ENCODE measurements at regions of chr11 and their contacts with region 1.

Region 1: GRCh38 chr11:3786781-3787428 is 10.4 kb downstream of the NUP98 start:
- DNase-seq: no peak
- H3K4me3 ChIP-seq: no peak overlapping the region
- H3K4me3 Mint-ChIP-seq: no peak overlapping the region
- H3K27ac Mint-ChIP-seq: no peak overlapping the region
- H3K4me1 ChIP-seq: 0 out of 2 replicates have a peak, but pooled peaks cover 7% of the 10 kb centered on the region
- H3K4me1 Mint-ChIP-seq: peaks cover 14% of the 10 kb centered on the region
- H3K27me3 ChIP-seq: no peaks in the 10 kb centered on the region
- H3K27me3 Mint-ChIP-seq: no peaks in the 10 kb centered on the region
- CTCF ChIP-seq: no peak

Region 2: GRCh38 chr11:3732671-3733436 is 54.1 kb before region 1 on chr11:
- CTCF ChIA-PET with region 1: no interaction called
- POLR2A ChIA-PET with region 1: no interaction called
- intact Hi-C with region 1: no loop called
- DNase-seq: no peak
- H3K4me3 ChIP-seq: no peak overlapping the region
- H3K4me3 Mint-ChIP-seq: no peak overlapping the region
- H3K27ac Mint-ChIP-seq: no peak overlapping the region
- H3K4me1 ChIP-seq: no peaks in the 10 kb centered on the region
- H3K4me1 Mint-ChIP-seq: peaks cover 13% of the 10 kb centered on the region
- H3K27me3 ChIP-seq: no peaks in the 10 kb centered on the region
- H3K27me3 Mint-ChIP-seq: no peaks in the 10 kb centered on the region
- CTCF ChIP-seq: no peak

Region 3: DNA sequence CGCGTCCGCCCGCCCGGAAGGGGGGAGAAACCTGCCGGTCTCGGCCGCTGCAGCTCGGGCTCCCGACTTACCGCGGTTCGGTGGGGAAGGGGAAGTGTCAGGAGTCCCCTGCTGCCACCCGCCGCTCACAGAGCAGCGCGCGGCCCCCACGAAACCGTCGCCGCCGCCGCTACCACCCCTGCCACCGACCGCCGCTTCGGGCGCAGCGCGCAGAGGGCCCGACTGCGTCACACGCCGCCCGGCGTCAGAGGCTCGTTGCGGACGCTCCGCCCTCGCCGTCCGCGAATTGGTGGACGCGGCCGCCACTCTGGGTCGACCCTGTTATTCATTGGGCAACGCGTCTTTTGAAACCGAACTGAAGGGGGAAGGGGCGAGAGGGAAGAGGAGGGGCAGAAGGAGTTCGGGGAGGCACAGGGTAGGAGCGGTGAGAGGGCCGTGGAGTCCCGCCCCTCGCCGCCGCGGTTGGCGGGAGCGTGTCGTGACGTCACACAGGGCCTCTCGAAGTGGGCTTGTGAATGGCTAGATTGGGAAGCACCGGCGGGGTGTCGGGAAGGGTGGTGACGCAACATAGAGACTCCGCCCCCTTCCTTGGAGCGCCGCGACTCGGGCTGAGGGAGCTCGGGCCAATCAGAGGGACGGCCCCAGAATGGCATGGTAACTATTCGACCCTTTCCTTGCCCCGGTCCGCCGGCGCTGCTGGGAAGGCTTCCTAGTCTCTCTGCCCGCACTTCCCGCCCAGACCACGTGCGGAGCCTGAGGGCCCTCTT is 10.6 kb after region 1 on chr11 and contains the start of gene NUP98:
- CTCF ChIA-PET with region 1: no interaction called
- POLR2A ChIA-PET with region 1: interaction called, 6 read pairs
- intact Hi-C with region 1: loop called (anchors 2 kb)
- DNase-seq: peak; percentile 100
- H3K4me3 ChIP-seq: peak within 1 kb of the TSS; percentile 59
- H3K4me3 Mint-ChIP-seq: peak within 1 kb of the TSS; percentile 90
- H3K27ac Mint-ChIP-seq: peak within 1 kb of the TSS; percentile 96
- H3K4me1 ChIP-seq: peaks cover 25% of the 10 kb centered on the region
- H3K4me1 Mint-ChIP-seq: peaks cover 12% of the 10 kb centered on the region
- H3K27me3 ChIP-seq: no peaks in the 10 kb centered on the region
- H3K27me3 Mint-ChIP-seq: no peaks in the 10 kb centered on the region
- CTCF ChIP-seq: no peak
- total RNA-seq, gene NUP98: 146 and 150 TPM in 2 replicates